HepG2 (cell line): ENCODE measurements at regions of chr5 and their contacts with region 1.

Region 1: GRCh38 chr5:142748568-142749249 is 21.5 kb upstream of the ARHGAP26 start:
- DNase-seq: peak; percentile 42
- ATAC-seq: peak; percentile 80
- H3K4me3 ChIP-seq: no peak overlapping the region
- H3K27ac ChIP-seq: no peak overlapping the region
- H3K4me1 ChIP-seq: peaks cover 36% of the 10 kb centered on the region
- H3K27me3 ChIP-seq: peaks cover 0 to under 1% of the 10 kb centered on the region in 2 experiments; a peak in 2 of 5 replicates
- CTCF ChIP-seq: peak; percentile 89
- EP300 ChIP-seq: no peak
- POLR2A ChIP-seq: no peak
- RAD21 ChIP-seq: peak; percentile 91

Region 2: DNA sequence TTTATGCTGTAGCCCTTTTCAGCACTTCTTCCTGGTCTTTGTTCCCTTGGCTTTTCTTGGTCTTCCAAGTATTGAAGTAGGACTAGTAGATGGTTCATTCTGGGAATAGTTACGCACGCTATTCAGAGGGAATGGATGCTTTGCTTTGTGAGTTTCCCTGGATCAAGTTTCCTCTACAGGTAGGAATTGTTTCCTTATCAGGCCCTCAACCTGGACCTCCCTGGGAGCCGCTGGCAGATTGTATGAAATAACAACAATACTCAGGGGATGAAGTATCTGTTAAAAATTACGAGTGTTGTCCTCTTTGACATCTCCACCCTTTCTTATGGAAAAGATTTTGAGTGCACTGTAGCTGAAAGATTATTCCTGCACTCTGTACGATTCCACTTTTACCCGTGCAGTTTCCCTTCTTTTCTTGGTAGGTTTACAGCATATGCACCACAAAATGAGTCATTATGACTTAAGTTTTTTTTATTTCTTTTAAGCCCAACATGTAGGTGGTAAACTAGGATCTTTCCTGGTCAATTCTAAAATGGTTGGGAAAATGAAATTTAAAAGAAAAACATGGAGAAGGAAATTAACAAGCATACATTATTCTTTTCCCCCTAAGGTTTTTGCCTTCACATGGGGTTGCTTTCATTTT is 79.3 kb after region 1 on chr5:
- CTCF ChIA-PET with region 1: no interaction called
- POLR2A ChIA-PET with region 1: no interaction called
- in situ Hi-C with region 1: no loop called
- intact Hi-C with region 1: no loop called
- DNase-seq: no peak
- ATAC-seq: no peak
- H3K4me3 ChIP-seq: no peak overlapping the region
- H3K27ac ChIP-seq: no peak overlapping the region
- H3K4me1 ChIP-seq: peaks cover 98% of the 10 kb centered on the region
- H3K27me3 ChIP-seq: no peaks in the 10 kb centered on the region
- CTCF ChIP-seq: no peak
- EP300 ChIP-seq: no peak
- POLR2A ChIP-seq: no peak
- RAD21 ChIP-seq: no peak

Region 3: GRCh38 chr5:142865414-142866045 is 116.8 kb after region 1 on chr5:
- CTCF ChIA-PET with region 1: interaction called, 30 read pairs
- POLR2A ChIA-PET with region 1: no interaction called
- in situ Hi-C with region 1: no loop called
- intact Hi-C with region 1: loop called (anchors 1 kb)
- DNase-seq: no peak
- ATAC-seq: no peak
- H3K4me3 ChIP-seq: no peak overlapping the region
- H3K27ac ChIP-seq: no peak overlapping the region
- H3K4me1 ChIP-seq: peaks cover 36% of the 10 kb centered on the region
- H3K27me3 ChIP-seq: no peaks in the 10 kb centered on the region
- CTCF ChIP-seq: no peak
- EP300 ChIP-seq: no peak
- POLR2A ChIP-seq: no peak
- RAD21 ChIP-seq: no peak

Region 4: DNA sequence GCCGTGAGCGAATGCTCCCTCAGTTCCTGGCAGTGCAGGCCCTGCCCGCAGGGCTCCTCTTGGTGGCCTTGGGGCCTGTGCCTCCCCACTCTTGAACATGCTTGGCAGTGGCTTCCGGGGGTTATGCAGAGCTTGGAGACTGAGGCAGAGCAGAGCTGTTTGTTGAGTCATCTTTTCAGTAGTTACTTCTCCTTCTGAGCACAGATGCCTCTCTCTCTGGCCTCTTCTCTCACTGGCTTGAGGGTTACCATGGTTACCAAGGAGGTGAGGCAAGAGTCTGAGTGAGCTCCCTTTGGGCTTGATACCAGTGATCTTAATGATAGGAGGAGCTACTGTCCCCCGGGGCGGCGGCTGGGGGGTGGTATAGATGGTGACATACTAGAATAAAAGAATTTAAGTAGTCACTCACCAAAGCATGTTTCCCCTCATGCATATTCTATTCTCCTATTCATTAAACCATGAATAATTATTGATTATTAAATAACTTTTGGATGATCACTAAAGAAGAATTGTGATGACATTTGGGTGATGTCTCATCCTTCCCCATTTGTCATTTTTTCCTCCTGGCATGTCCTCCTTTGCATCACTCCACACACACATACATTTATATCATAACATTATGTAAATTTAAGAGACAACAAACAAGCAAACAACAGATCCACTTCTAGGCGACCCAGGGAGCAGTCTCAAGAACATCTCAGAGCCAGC is 132.5 kb after region 1 on chr5:
- CTCF ChIA-PET with region 1: interaction called, 53 read pairs
- POLR2A ChIA-PET with region 1: no interaction called
- in situ Hi-C with region 1: loop called (anchors 5 kb)
- intact Hi-C with region 1: loop called (anchors 1 kb)
- DNase-seq: no peak
- ATAC-seq: no peak
- H3K4me3 ChIP-seq: no peak overlapping the region
- H3K27ac ChIP-seq: no peak overlapping the region
- H3K4me1 ChIP-seq: 0 out of 2 replicates have a peak, but pooled peaks cover 7% of the 10 kb centered on the region
- H3K27me3 ChIP-seq: no peaks in the 10 kb centered on the region
- CTCF ChIP-seq: no peak
- EP300 ChIP-seq: no peak
- POLR2A ChIP-seq: no peak
- RAD21 ChIP-seq: no peak

Region 5: DNA sequence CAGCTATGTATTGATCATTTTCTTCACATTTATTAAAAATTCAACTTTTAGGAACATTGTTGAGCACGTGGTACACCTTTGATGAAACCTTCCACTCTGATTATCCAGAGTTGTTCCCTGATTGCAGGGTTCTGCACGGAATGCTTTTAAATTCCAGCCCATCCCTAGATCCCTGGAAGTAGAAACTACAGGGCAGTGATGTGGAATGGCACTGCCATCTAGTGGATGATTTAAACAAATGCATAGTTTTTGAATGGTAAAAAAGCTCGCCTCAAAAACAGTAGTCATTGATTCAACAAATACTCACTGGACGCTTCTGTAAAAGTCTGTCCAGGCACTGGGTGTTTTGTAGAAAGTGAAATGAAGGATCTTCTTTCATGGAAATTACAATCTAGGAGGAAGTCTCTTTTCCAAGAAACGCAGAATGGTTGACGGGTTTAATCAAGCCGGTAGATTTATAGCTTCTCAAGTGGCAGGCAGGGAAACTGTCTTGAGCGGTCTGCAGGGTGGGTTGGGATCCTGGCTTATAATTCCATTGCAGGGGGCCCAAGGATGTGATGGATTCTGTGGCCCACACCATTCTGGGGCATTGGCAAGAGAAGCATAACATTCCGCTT is 139.9 kb after region 1 on chr5:
- CTCF ChIA-PET with region 1: interaction called, 20 read pairs
- POLR2A ChIA-PET with region 1: no interaction called
- in situ Hi-C with region 1: loop called (anchors 5 kb)
- intact Hi-C with region 1: no loop called
- DNase-seq: peak; percentile 61
- ATAC-seq: peak; percentile 80
- H3K4me3 ChIP-seq: no peak overlapping the region
- H3K27ac ChIP-seq: no peak overlapping the region
- H3K4me1 ChIP-seq: 0 out of 2 replicates have a peak, but pooled peaks cover 7% of the 10 kb centered on the region
- H3K27me3 ChIP-seq: no peaks in the 10 kb centered on the region
- CTCF ChIP-seq: peak; percentile 78
- EP300 ChIP-seq: no peak
- POLR2A ChIP-seq: no peak
- RAD21 ChIP-seq: peak; percentile 54; the same call in 1 of the 2 replicates